Endothelial cell of umbilical vein (primary cell): ENCODE measurements at regions of chr7 and their contacts with region 1.

Region 1: DNA sequence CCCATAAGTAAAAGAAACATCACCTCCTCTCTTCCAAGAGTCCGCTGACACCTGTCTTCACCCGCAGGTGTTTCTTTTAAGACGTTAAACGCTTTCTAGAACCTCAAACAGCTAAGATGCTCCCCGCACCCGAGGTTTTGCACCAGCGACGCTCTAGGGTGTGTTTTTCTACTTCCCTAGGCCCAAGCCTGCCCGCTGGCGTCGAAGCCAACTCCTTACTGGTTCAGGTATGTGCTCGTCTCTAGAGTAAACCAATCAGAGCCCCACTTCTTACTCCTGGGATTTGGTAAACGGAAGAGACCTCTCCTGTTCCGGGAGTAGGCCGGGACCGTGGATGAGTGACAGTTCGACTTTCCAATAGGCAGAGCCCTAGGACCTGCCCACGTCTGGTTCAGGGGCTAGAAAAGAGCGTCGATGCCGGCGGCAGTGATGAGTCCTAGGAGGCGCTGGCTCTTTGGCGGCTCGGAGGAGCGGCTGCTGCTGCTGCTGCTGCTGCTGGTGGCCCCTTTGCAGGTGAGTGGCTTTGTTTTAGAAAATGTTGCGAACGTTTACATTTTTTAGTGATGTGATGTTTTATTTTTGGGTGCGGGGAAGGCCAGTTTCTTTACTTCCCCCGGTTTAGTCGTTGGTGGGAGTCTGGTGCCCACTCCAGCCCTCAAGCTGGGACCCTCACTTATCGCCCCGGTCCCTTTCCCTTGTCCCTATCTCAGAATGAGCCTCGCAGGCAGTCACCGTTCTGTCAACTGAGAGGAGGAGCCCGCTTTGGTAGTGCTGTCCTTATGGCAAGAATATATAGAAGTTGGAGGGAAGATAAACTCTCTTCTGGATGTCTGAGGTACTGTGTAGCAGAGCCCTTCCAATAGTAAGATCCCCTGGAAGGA is at the start of gene BPGM:
- DNase-seq: peak; percentile 100
- H3K4me3 ChIP-seq: peak within 1 kb of the TSS; percentile 78 to 99 (median 97)
- H3K27ac ChIP-seq: peak within 1 kb of the TSS; percentile 81
- H3K4me1 ChIP-seq: peaks cover 11% of the 10 kb centered on the region
- H3K27me3 ChIP-seq: no peaks in the 10 kb centered on the region
- CTCF ChIP-seq: peak in 1 of 2 donors; percentile 36
- POLR2A ChIP-seq: peak; percentile 95
- total RNA-seq, gene BPGM: 28.3 and 44.4 TPM in 2 replicates

Region 2: DNA sequence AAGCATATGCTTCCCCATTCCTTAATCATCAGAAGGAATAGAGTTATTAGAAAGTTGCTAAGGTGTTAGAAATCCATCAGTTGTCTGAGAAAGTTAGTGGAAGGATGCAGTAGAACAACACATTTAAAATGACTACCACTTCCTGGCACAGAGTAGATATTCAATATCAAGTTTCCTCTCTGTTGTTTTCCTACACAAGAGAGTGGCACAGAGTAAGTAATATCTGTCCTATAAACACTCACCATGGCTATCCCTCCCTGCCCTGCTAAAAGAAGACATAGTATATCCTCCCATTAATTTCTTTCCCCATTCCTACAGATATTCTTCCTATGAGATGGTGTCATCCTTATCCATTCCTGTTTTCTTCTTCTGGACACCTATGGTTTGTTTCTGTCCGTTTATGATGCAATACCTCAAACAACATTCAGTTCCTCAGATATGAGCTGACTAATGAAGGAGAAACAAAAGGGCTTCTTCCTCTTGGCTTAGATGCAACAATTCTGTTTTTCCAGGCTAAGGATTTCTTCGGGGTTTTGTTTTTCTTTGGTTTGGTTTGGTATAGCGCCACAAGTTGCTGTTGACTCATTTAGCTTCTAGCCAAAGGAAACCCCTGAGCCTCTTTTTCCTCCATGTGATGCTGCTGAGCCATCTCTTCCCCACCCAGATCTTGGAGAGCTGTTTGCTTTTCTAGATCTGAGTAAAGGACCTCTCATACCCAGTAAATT is 32.9 kb before region 1 on chr7:
- CTCF ChIA-PET with region 1: interaction called, 6 read pairs
- POLR2A ChIA-PET with region 1: interaction called, 3 read pairs
- dilution Hi-C with region 1: no loop called
- intact Hi-C with region 1: loop called (anchors 1 kb)
- DNase-seq: peak; percentile 99
- H3K4me3 ChIP-seq: peak overlapping the region in 1 of 3 experiments; percentile 3
- H3K27ac ChIP-seq: peak overlapping the region; percentile 85
- H3K4me1 ChIP-seq: peaks cover 28% of the 10 kb centered on the region
- H3K27me3 ChIP-seq: no peaks in the 10 kb centered on the region
- CTCF ChIP-seq: no peak
- POLR2A ChIP-seq: peak; percentile 64

Region 3: DNA sequence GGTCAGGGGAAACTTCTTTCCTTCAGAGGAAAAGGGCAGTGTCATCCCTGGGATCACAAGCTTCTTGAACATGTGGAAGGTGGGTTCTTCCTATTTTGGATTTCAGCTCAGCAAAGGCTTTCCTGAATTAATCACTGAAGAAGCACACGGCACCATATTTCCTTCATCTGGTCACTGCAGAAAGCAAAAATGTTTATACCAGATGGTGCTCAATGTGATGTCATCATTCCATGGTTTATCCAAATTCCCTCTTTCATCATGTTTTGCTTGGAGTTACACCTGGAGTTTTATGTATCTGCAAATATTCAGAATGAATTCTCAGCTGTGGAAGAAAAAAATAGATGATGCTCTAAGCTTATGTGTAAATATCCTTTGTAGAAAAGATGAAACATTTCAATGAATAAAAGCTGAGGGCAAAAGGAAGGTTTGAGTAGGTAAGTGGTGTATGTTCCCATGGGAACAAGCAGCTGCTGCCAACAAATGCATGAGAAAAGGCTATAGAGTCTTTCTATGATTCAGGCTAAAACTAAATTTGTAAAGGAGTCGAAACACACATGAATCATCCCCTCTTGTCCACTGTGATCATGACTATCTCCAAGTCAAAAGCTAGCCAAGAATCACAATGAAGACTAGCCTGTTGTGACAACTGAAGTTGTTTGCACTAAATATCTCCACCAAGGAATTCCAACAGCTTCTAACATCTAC is 26.9 kb before region 1 on chr7:
- CTCF ChIA-PET with region 1: interaction called, 4 read pairs
- POLR2A ChIA-PET with region 1: no interaction called
- dilution Hi-C with region 1: no loop called
- intact Hi-C with region 1: loop called (anchors 1 kb)
- DNase-seq: peak; percentile 83
- H3K4me3 ChIP-seq: no peak overlapping the region
- H3K27ac ChIP-seq: peak overlapping the region; percentile 23
- H3K4me1 ChIP-seq: peaks cover 26% of the 10 kb centered on the region
- H3K27me3 ChIP-seq: no peaks in the 10 kb centered on the region
- CTCF ChIP-seq: no peak
- POLR2A ChIP-seq: no peak

Region 4: GRCh38 chr7:134660961-134661376 is 14.3 kb after region 1 on chr7:
- CTCF ChIA-PET with region 1: interaction called, 10 read pairs
- POLR2A ChIA-PET with region 1: interaction called, 6 read pairs
- dilution Hi-C with region 1: no loop called
- intact Hi-C with region 1: loop called (anchors 1 kb)
- DNase-seq: peak; percentile 86
- H3K4me3 ChIP-seq: no peak overlapping the region
- H3K27ac ChIP-seq: peak overlapping the region; percentile 94
- H3K4me1 ChIP-seq: peaks cover 42% of the 10 kb centered on the region
- H3K27me3 ChIP-seq: no peaks in the 10 kb centered on the region
- CTCF ChIP-seq: no peak
- POLR2A ChIP-seq: no peak

Region 5: DNA sequence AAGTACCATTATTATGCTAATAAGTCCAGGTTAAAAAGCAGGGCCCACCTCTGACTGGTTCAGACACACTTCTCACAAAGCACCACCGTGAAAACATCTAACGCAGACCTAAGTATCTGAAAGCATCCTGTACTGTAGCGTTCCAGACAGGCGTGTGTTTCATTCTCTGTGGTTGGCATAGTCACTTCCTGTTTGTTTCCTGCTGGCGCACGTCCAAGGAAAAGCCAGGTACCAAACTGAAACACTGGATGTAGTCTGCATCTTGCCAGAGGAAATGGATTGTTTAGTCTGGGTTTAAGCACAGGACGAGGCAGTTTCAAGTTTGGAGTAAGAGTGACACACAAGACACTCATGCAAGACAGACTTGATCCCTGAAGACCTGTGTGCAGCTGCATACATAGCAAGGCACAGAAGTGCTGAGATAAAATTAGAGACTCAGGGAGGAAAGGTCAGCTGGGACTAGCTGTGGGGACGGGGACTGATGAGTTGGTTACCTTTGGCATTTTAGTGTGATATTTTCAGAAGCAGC is 23.2 kb after region 1 on chr7:
- CTCF ChIA-PET with region 1: interaction called, 4 read pairs
- POLR2A ChIA-PET with region 1: interaction called, 5 read pairs
- dilution Hi-C with region 1: no loop called
- intact Hi-C with region 1: loop called (anchors 1 kb)
- DNase-seq: peak; percentile 99
- H3K4me3 ChIP-seq: peak overlapping the region in 1 of 3 experiments; percentile 10
- H3K27ac ChIP-seq: peak overlapping the region; percentile 100
- H3K4me1 ChIP-seq: peaks cover 50% of the 10 kb centered on the region
- H3K27me3 ChIP-seq: no peaks in the 10 kb centered on the region
- CTCF ChIP-seq: no peak
- POLR2A ChIP-seq: no peak